Activated naive CD4-positive, alpha-beta T cell treated with anti-CD3 and anti-CD28 coated beads, Interleukin-2, amount 10 ng/mL, durations not matched to agents 7 days and 5 days (primary cell): ENCODE measurements at regions of chr11 and their contacts with region 1.

Region 1: DNA sequence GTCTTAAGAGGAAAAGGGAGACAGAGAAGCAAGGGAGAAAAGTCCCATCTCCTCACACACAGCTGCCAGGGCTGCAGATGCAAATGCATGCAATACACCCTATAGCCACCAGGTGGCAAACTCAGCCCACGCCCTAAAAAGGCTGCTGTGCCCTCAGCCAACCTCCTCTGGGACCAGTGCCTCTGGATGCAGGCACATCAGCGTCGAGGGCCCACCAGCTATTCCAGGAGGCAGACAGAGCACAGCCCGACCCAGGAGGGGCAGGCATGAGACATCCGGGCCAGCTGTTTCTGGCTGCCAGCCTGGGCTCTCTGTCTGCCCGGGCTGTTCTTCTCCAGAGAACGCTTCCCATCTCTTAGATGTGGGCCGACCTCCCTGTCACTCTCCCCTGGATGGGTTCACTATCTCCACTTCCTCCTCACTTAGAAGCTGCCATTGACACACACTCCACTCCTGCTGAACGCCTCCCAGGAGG is 39.7 kb downstream of the TPBGL start:
- DNase-seq: peak; percentile 85
- H3K4me3 Mint-ChIP-seq: no peak overlapping the region
- H3K27ac Mint-ChIP-seq: no peak overlapping the region
- H3K4me1 Mint-ChIP-seq: peaks cover 38% of the 10 kb centered on the region
- H3K27me3 Mint-ChIP-seq: no peaks in the 10 kb centered on the region

Region 2: GRCh38 chr11:75313513-75314272 is 33.4 kb after region 1 on chr11:
- CTCF ChIA-PET with region 1: interaction called, 10 read pairs
- DNase-seq: no peak
- H3K4me3 Mint-ChIP-seq: no peak overlapping the region
- H3K27ac Mint-ChIP-seq: no peak overlapping the region
- H3K4me1 Mint-ChIP-seq: peaks cover 5% of the 10 kb centered on the region
- H3K27me3 Mint-ChIP-seq: no peaks in the 10 kb centered on the region

Region 3: GRCh38 chr11:75328426-75329277 is 48.4 kb after region 1 on chr11:
- CTCF ChIA-PET with region 1: interaction called, 11 read pairs
- DNase-seq: peak; percentile 81
- H3K4me3 Mint-ChIP-seq: no peak overlapping the region
- H3K27ac Mint-ChIP-seq: peak overlapping the region; percentile 91
- H3K4me1 Mint-ChIP-seq: peaks cover 70% of the 10 kb centered on the region
- H3K27me3 Mint-ChIP-seq: no peaks in the 10 kb centered on the region

Region 4: DNA sequence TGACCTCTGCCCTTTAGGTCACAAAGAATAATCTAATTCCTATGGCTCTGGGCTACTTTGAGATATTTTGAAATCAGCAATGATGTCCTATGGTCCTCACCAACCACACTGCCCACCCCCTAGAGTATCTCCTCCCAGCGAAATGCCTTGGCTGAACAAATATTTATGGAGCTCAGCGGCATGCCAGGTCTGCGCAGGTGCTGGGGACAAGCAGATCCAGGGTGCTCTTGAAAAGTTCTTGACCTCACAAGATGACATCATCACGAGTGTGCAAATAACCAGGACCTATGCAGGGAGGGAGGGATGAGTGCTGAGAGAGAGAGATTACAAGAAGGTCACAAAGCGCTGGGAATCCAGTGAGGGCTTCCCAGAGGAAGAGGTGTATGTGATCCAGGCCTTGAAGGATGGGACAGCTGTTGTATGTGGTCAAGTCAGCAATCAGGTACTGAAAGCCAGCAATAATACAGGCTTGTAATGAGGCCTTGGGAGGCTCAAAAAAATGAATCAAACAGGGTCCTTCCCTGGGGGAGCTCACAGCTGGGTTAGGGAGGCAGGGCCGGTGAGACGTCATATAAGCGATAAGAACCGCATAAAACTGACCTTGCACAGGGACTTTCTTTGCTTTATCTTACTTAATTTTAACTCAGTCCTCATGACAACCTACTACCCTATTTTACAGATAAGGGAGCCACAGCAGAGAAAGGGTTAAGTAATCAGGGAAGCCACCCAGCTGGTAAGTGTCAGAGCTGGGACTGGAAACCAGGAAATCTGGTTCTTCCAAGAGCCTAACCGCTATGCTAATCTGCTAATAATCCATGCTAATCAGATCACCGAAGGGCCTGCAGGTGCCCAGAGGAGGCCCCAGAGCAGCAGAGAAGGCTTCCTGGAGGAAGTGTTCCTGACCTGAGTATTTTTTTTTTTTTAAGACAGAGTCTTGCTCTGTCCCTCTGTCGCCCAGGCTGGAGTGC is 62.9 kb after region 1 on chr11:
- CTCF ChIA-PET with region 1: interaction called, 17 read pairs
- DNase-seq: no peak
- H3K4me3 Mint-ChIP-seq: no peak overlapping the region
- H3K27ac Mint-ChIP-seq: no peak overlapping the region
- H3K4me1 Mint-ChIP-seq: peaks cover 79% of the 10 kb centered on the region
- H3K27me3 Mint-ChIP-seq: no peaks in the 10 kb centered on the region